Sciatic nerve (tissue), 2 donors: ENCODE measurements at regions of chr16 and their contacts with region 1.

Region 1: GRCh38 chr16:87765776-87766484 is at the start of gene KLHDC4:
- DNase-seq: peak; percentile 93
- ATAC-seq: peak; percentile 96
- total RNA-seq, gene KLHDC4: 41.5 TPM

Region 2: DNA sequence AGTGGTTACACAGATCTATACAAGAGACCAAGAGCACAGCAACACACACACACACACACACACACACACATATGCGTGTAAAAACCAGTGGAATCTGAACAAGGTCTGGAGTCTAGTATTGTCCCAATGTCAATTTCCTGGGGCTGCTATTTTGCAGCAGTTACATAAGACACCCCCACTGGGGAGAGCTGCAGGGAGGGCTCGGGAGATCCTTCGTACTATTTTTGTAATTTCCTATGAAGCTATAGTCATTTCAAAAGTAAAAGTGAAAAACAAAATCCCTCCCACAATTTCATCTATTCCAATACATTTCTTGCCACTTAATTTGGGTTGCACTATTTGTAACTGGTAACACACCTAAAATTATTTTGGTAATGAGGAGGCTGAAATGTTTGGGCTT is 517.2 kb before region 1 on chr16:
- intact Hi-C with region 1: no loop called
- DNase-seq: peak; percentile 10
- ATAC-seq: no peak

Region 3: DNA sequence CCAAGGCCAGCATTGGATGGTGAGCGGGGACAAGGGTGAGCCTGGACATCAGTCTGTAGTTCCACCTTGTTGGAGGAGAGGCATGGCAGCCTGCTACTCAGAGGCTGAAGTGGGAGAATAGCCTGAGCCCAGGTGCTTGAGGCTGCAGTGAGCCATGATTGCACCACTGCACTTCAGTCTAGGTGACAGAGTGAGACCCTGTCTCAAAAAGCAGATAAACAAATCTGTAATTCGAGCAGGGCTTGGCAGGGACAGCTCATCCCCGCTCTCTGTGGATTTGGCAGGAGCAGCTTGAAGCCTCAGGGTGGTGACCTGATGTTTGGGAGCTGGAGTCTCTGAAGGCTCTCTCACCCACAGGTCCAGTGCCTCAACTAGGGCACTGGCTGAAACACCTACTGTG is 234.5 kb before region 1 on chr16:
- intact Hi-C with region 1: no loop called
- DNase-seq: no peak
- ATAC-seq: no peak

Region 4: GRCh38 chr16:87593710-87594258 is 172.1 kb before region 1 on chr16:
- intact Hi-C with region 1: loop called (anchors 5 kb)
- DNase-seq: no peak
- ATAC-seq: no peak